GM10248 (cell line): ENCODE measurements at regions of chr20 and their contacts with region 1.

Region 1: DNA sequence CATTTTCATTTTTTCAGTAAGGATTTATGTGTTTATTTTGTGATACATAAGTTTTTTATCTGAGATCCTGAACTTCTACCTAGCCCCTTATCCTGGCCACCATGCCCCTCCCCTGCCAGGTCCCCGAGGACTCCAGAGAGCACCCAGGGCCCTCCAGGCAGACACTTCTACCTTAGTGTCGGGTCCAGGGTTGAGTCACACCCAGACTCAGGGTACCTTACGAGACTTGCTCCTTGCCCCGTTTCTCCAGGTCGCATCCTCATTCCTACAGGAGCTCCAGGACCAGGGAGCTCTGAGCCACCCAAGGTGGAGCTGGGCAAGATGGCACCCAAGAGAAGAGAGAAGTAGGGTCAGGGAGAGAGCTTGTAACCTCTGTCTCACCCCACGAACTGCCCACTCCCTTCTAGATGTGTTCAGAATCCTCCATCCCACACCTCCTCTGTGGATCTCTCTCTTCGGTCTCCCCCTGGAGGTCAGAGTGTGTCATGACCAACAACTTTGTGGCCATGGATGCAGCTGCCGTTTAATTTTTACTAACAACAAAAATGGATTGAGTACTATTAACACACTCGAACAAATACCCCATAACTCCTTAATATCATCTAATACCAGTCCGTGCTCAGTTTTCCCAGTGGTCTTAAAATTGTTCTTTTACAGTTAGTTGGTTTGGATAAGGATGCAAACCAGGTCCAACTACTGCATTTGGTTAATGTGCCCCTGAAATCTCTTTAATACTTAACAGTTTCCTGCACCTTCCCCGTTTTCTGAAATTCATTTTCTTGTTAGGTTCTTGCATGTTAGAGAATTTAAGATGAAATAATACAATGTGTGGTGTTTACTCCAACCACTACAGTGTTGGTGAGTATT is 130.6 kb upstream of the INSM1 start:
- DNase-seq: peak; percentile 73
- CTCF ChIP-seq: peak; percentile 78

Region 2: GRCh38 chr20:20024942-20025341 is 212.4 kb before region 1 on chr20:
- CTCF ChIA-PET with region 1: no interaction called
- POLR2A ChIA-PET with region 1: no interaction called
- DNase-seq: no peak
- CTCF ChIP-seq: no peak

Region 3: DNA sequence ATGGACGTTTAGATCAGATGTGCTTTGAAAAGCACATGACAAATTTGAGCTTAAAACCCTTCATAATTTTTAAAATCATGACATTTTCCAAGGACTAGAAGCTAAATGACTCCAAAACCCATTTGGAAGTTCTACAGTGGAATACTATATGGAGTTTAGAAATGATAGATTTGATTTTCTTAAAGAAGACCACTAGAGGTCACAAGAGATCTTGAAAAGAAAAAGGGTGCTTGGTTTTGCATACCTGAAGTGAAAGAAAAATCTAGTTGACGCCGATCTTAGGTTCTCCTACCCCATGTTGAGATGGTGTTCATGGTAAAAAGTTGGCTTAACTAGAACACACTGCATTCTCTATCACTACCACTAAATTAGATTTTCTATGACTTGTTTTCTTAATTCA is 153.5 kb before region 1 on chr20:
- CTCF ChIA-PET with region 1: interaction called, 49 read pairs
- POLR2A ChIA-PET with region 1: no interaction called
- DNase-seq: peak; percentile 46
- CTCF ChIP-seq: peak; percentile 50

Region 4: DNA sequence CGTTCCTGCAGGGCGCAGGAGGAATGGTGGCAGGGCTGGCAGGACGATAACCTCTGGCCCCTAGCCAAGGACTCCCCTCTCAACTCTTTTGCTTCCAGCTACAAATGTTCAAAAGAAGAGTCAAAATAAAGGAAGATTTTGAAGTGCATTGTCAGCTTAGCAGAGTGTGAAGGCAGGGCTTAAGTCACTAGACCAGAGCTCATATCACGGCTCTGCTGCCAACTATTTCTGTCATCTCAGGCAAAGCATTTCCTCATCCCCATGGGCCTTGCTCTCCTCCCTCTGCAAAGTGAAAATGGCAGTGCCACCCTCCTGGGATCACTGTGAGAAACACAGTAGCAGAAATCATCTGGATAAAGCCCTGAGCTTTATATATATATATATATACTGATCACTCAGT is 148.3 kb before region 1 on chr20:
- CTCF ChIA-PET with region 1: interaction called, 49 read pairs
- POLR2A ChIA-PET with region 1: no interaction called
- DNase-seq: no peak
- CTCF ChIP-seq: no peak

Region 5: GRCh38 chr20:20211274-20211987 is 25.9 kb before region 1 on chr20:
- CTCF ChIA-PET with region 1: interaction called, 14 read pairs
- POLR2A ChIA-PET with region 1: no interaction called
- DNase-seq: no peak
- CTCF ChIP-seq: no peak

Region 6: DNA sequence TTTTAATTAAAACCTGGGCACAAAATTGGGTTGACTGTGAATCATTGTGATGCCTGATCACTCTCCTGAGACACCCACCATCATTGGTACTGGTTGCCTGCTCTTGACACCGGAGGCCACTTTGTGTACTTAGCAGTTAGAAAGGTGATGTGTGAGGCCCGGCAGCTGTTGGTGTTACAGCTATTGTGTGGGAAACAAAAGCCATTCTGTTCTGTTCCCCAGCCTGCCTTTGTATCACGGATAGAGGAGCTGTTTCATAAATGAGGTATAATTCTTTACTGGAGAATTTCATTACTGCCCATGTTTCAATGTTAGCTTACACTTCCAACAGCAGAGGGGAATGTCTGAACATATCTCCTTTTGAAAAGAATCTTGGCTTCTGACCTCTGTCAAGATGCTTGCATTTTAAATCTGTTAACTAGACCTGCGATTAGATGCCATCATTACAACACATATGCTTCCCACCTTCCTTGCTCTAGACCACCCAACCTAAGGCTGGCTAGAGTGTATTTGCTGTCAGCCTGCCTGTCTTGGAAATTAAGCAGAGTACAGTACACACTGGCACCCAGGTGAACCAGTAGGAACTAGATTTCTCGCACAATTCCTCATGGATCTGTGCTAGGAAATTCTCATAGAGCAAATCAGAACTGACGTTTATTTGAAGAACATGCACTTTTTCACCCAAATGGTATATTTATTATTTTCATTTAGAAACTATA is 11.8 kb before region 1 on chr20:
- CTCF ChIA-PET with region 1: interaction called, 35 read pairs
- POLR2A ChIA-PET with region 1: no interaction called
- DNase-seq: no peak
- CTCF ChIP-seq: no peak

Region 7: DNA sequence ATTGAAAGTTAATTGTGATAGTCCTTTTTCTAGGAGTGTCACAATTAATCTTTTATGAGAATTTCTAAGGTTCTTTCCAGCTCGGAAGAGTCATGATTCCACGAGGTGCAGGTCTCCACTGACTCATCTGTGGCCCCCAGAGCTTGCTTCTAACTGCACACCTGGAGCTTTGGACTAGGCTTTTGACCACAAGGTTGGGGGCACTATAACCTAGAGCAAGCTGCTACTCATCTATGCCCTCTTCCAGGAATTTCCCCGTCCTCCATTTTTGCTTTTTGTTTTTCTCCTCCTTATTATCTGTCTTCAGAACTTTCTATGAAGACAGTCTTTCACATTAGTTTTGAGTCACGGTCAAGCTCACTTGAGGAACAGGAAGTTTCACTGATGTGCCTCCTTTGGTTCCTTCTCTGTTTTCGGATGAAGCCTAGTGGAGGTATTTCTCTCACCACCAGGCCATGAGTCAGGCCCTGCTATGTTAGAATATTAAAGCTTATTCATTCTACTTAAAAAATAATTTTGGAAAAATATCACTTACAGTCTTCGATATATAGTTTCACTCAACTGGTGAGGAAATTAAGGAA is 11.4 kb after region 1 on chr20:
- CTCF ChIA-PET with region 1: interaction called, 34 read pairs
- POLR2A ChIA-PET with region 1: no interaction called
- DNase-seq: no peak
- CTCF ChIP-seq: no peak

Region 8: GRCh38 chr20:20255099-20255498 is 17.8 kb after region 1 on chr20:
- CTCF ChIA-PET with region 1: interaction called, 34 read pairs
- POLR2A ChIA-PET with region 1: no interaction called
- DNase-seq: no peak
- CTCF ChIP-seq: no peak